ENCODE measurements at regions of chr10 and their contacts with region 1.

Region 1: DNA sequence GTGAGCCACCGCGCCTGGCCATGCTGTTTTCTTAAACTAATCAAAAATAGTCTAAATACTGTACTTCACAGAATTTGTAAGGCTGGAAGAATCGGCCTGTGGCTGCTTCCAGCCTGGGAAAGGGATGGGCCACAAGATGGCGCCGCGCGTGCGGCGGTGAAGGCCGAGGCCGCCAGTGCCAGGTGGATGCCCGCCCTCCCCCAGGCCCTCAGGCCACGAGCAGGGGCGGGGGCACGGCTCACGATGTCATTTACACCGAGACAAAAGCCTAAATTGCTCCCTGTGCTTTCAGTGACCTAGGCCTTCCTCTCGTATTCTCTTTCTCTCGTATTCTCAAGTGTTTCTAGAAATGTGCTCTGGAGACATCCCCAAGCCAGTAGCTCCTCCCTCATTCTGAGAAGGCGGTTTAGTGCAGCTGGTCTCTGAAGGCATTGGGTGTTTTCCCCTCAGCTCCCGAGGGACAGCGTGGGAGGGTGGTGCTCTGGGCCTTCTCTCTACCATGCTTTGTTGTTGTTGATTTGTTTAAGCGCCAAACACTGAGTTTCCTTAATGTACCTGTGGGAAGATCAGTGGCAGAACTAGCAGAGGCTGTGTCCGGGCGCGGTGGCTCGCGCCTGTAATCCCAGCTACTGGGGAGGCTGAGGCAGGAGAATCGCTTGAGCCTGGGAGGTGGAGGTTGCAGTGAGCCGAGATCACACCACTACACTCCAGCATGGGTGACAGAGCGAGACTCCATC is 68.4 kb downstream of the CDC123 start:
- DNase-seq: peak; percentile 97
- H3K4me3 ChIP-seq: peak overlapping the region; percentile 37
- H3K27ac ChIP-seq: peak overlapping the region; percentile 78
- H3K4me1 ChIP-seq: peaks cover 25% of the 10 kb centered on the region
- CTCF ChIP-seq: peak; percentile 89

Region 2: DNA sequence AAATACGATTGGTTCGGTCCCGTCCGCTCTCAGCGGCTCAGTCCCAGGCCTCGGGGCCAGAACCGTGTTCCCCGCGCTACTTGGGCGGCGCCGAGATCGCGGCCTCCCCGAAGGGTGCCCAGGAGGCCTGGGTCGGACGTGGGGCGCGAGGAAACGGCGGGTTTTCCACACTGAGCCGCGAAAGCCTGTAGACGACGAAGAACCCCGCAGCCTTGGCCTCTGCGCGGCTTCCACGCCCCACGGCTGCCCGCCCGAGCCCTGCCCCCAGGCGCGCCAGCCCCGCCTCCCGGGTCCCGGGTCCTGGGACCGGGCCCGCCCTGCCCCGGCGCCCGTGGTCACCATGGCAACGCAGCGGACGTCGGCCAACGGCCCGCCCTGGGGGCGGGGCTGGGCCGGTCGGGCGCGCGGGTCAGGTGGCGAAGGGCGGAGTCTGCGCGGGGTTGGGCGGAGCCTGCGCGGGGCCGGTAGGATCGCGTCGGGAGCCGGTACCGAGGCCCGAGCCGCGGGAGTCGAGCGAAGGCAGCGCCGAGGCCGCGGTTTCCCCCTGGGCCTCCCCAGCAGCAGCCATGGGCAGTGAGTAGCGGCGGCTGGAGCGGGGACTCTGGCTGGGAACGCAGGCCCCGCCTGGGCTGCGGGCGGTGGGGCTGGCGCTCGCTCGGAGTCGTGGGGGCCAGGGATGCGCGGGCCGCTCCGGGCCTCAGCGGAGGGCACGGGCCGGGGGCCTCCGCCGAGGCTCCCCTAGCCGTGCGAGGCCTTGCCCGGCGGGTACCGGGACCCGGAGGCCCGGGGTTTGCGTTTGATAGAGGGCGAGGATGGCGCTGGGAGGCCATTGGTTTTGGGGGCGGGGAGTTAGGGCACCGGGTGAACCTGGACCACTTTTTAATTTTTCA is 134.9 kb before region 1 on chr10 and contains the start of gene SEC61A2:
- CTCF ChIA-PET with region 1: no interaction called
- POLR2A ChIA-PET with region 1: no interaction called
- intact Hi-C with region 1: no loop called
- DNase-seq: peak; percentile 96
- H3K4me3 ChIP-seq: peak within 1 kb of the TSS; percentile 91
- H3K27ac ChIP-seq: peak within 1 kb of the TSS; percentile 36
- H3K4me1 ChIP-seq: peaks cover 6% of the 10 kb centered on the region
- CTCF ChIP-seq: no peak
- total RNA-seq, gene SEC61A2: 4.8 and 5.5 TPM in 2 replicates

Region 3: GRCh38 chr10:12348870-12349628 is 84.7 kb after region 1 on chr10 and contains the start of gene CAMK1D:
- CTCF ChIA-PET with region 1: interaction called, 3 read pairs
- POLR2A ChIA-PET with region 1: interaction called, 7 read pairs
- intact Hi-C with region 1: loop called (anchors 1 kb)
- DNase-seq: peak; percentile 90
- H3K4me3 ChIP-seq: peak within 1 kb of the TSS; percentile 84
- H3K27ac ChIP-seq: peak within 1 kb of the TSS; percentile 80
- H3K4me1 ChIP-seq: peaks cover 55% of the 10 kb centered on the region
- CTCF ChIP-seq: peak; percentile 52
- total RNA-seq, gene CAMK1D: 17.8 and 19.0 TPM in 2 replicates

Region 4: DNA sequence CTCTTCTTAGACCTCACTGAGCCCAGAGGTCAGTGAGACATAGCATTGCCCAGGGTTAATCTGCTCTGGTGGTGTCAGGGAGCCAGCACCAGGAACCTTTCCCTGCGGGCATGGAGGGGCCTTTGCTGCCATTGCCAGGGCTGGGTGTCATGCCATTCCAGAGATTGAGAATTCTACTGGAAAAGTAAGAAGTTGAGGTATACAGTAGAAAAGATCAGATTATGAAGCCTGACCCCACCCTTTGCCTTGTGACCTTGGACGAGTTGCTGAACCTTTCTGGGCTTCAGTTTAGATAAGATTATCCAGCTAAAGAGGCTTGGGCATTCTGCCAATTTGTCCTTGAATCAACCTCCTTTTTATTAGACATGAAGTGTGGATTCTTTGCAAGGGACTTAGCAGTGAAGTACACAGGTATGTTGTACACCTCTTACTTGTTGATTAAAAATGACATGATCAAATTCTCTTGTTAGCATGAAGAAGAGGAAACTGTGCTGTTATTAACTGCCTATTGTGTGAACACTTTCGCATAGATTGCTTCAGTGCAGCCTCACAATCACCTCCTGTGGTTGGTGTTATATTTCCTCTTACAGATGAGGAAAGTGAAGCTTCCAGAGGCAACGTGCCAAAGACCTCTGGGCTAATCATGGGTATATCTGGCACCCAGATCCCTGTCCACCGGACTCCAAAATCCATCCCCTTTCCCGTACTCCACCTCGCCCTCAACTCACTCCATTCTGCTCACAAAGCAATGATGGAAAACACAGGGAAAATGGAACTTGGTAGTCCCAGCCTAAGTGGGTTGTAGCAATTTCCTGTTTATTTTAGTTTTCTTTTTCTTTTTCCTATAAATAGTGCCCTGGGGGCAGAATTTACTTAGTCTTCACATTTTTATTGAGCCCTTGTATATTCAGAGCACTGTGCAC is 236.3 kb after region 1 on chr10:
- CTCF ChIA-PET with region 1: no interaction called
- POLR2A ChIA-PET with region 1: no interaction called
- intact Hi-C with region 1: no loop called
- DNase-seq: no peak
- H3K4me3 ChIP-seq: no peak overlapping the region
- H3K27ac ChIP-seq: no peak overlapping the region
- H3K4me1 ChIP-seq: no peaks in the 10 kb centered on the region
- CTCF ChIP-seq: no peak

Region 5: DNA sequence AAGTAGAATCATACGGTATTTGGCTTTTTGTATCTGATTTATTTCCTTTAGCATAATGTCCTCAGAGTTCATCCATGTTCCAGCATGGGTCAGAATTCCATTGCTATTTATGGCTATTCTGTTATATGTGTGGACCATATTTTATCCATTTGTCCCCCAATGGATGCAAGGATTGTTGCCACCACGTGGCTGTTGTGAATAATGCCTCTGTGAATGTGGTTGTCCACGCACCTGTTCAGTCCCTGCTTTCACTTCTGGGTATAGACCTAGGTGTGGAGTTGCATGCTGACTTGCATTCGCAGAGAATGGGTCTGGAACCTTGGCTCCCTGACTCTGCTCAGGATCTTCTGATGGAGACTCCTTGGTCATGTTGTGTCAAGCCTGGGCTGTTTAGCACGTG is 284.9 kb after region 1 on chr10:
- CTCF ChIA-PET with region 1: no interaction called
- POLR2A ChIA-PET with region 1: no interaction called
- intact Hi-C with region 1: loop called (anchors 1 kb)
- DNase-seq: peak; percentile 40
- H3K4me3 ChIP-seq: no peak overlapping the region
- H3K27ac ChIP-seq: no peak overlapping the region
- H3K4me1 ChIP-seq: no peaks in the 10 kb centered on the region
- CTCF ChIP-seq: peak; percentile 62

Region 6: GRCh38 chr10:12710594-12711349 is 446.4 kb after region 1 on chr10:
- CTCF ChIA-PET with region 1: interaction called, 3 read pairs
- POLR2A ChIA-PET with region 1: interaction called, 6 read pairs
- intact Hi-C with region 1: loop called (anchors 1 kb)
- DNase-seq: peak; percentile 73
- H3K4me3 ChIP-seq: no peak overlapping the region
- H3K27ac ChIP-seq: no peak overlapping the region
- H3K4me1 ChIP-seq: no peaks in the 10 kb centered on the region
- CTCF ChIP-seq: peak; percentile 98

Measured in OCI-LY7 (cell line).